ENCODE measurements at regions of chr15 and their contacts with region 1.

Region 1: DNA sequence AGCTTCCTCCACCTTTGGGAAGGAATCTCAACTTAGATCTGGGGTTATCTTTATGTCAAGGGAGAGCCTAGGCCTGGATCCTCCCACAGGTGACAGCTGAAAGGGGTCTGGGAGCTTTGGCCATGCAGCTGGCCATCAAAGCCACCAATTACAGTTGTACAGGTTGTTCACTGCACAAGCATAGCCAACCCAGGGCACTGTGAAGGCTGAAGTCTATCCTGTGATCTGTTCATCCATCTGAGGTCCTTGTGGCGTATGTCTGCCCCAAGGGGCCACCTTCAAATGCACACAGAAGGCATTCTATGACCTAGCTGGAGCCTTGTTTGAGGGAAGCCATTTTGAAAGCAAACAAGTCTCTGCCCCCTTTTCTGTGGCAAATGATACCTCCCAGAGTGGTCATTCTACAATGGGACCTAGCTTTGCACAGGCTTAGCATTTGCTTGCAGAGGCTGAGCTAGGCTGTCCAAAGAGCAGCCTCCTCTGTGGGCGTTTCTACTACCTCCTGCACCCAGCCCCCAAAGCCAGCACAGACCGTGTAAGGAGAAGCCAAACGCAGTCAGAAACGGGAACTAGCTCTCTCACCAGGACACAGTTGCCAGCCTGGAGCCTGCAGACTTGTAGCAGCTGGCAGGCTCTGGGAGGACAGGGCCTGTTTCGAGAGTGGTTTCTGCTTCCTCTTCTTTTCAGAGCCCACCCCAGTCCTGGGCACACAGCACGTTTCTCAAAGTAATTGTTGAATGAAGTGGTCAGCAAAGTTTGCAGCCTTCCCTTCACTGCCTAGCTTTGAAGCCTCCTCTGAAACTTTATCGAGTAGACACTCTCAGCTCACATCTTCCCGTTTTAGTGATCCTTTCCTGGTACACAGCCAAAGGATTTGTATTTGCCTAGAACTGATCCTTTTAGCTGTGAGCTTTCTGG is 157.3 kb upstream of the SMAD3 start:
- DNase-seq: no peak
- ATAC-seq: peak; percentile 53
- H3K4me3 Mint-ChIP-seq: no peak overlapping the region
- H3K27ac Mint-ChIP-seq: peak overlapping the region; percentile 61
- H3K4me1 Mint-ChIP-seq: peaks cover 35% of the 10 kb centered on the region
- H3K27me3 Mint-ChIP-seq: peaks cover 3% of the 10 kb centered on the region
- CTCF ChIP-seq: no peak

Region 2: GRCh38 chr15:66603301-66604179 is 304.5 kb before region 1 on chr15:
- CTCF ChIA-PET with region 1: interaction called, 3 read pairs
- POLR2A ChIA-PET with region 1: no interaction called
- intact Hi-C with region 1: loop called (anchors 1 kb)
- DNase-seq: peak; percentile 56
- ATAC-seq: peak; percentile 65
- H3K4me3 Mint-ChIP-seq: no peak overlapping the region
- H3K27ac Mint-ChIP-seq: no peak overlapping the region
- H3K4me1 Mint-ChIP-seq: no peaks in the 10 kb centered on the region
- H3K27me3 Mint-ChIP-seq: peaks cover 8% of the 10 kb centered on the region
- CTCF ChIP-seq: no peak

Region 3: GRCh38 chr15:67165254-67166253 is 257.5 kb after region 1 on chr15:
- CTCF ChIA-PET with region 1: no interaction called
- POLR2A ChIA-PET with region 1: no interaction called
- intact Hi-C with region 1: no loop called
- DNase-seq: no peak
- ATAC-seq: no peak
- H3K4me3 Mint-ChIP-seq: no peak overlapping the region
- H3K27ac Mint-ChIP-seq: no peak overlapping the region
- H3K4me1 Mint-ChIP-seq: peaks cover 42% of the 10 kb centered on the region
- H3K27me3 Mint-ChIP-seq: no peaks in the 10 kb centered on the region
- CTCF ChIP-seq: no peak